Activated CD4-positive, alpha-beta T cell treated with anti-CD3 and anti-CD28 coated beads for 36 hours (primary cell): ENCODE measurements at regions of chr12 and their contacts with region 1.

Region 1: GRCh38 chr12:751192-751998 is 984 bp upstream of the WNK1 start:
- DNase-seq: peak; percentile 93
- ATAC-seq: peak; percentile 50
- H3K4me3 Mint-ChIP-seq: no peak overlapping the region
- H3K27ac Mint-ChIP-seq: no peak overlapping the region
- H3K4me1 Mint-ChIP-seq: peaks cover 17% of the 10 kb centered on the region
- H3K27me3 Mint-ChIP-seq: no peaks in the 10 kb centered on the region

Region 2: DNA sequence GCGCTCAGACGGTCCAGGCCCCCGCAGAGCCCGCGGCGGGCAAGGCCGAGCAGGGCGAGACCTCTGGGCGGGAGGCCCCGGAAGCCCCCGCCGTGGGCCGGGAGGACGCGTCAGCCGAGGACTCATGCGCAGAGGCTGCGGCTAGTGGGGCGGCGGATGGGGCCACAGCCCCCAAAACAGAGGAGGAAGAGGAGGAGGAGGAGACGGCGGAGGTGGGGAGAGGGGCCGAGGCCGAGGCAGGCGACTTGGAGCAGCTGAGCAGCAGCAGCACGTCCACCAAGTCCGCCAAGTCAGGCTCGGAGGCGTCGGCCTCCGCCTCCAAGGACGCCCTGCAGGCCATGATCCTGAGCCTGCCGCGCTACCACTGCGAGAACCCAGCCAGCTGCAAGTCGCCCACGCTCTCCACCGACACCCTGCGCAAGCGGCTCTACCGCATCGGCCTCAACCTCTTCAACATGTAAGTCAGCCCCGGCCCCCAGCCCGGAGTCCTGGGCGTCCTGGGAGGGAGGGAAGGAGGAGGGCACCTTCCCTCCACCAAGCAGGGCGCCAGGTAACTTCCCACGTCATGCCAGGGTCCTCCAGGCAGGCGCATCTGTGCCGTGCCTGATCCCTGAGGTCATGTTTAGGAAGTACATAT is 612.4 kb before region 1 on chr12:
- CTCF ChIA-PET with region 1: no interaction called
- POLR2A ChIA-PET with region 1: no interaction called
- intact Hi-C with region 1: no loop called
- DNase-seq: peak; percentile 43
- ATAC-seq: peak; percentile 36
- H3K4me3 Mint-ChIP-seq: no peak overlapping the region
- H3K27ac Mint-ChIP-seq: no peak overlapping the region
- H3K4me1 Mint-ChIP-seq: no peaks in the 10 kb centered on the region
- H3K27me3 Mint-ChIP-seq: peaks cover 26% of the 10 kb centered on the region

Region 3: GRCh38 chr12:459430-460258 is 291.8 kb before region 1 on chr12 and contains the start of gene B4GALNT3:
- CTCF ChIA-PET with region 1: no interaction called
- POLR2A ChIA-PET with region 1: no interaction called
- intact Hi-C with region 1: loop called in 1 of 2 experiments (anchors 10 kb)
- DNase-seq: peak; percentile 63
- ATAC-seq: peak; percentile 60
- H3K4me3 Mint-ChIP-seq: peak within 1 kb of the TSS; percentile 74
- H3K27ac Mint-ChIP-seq: no peak within 1 kb of the TSS
- H3K4me1 Mint-ChIP-seq: peaks cover 15% of the 10 kb centered on the region
- H3K27me3 Mint-ChIP-seq: peaks cover 26% of the 10 kb centered on the region
- total RNA-seq, gene B4GALNT3: 2.2 to 3.3 TPM

Region 4: DNA sequence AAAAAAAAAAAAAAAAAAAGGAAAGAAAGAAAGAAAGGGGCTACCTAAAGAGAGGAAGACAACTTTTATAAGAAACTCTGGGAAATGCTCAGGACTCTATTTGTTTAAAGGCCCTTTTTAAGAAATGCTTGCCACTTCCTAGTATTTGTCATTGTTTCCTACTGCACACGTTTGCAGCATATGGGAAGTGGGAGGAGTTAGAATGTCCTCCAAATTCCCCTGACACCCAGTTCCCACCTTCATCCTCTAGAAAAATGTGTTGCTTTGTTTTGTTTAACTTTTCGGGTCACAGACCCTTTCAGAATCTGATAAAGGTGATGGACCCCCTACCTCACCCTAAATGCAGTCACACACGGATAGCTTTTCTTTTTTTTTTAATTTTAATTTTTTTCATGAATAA is 129.0 kb before region 1 on chr12:
- CTCF ChIA-PET with region 1: interaction called, 14 read pairs
- POLR2A ChIA-PET with region 1: interaction called, 3 read pairs
- intact Hi-C with region 1: no loop called
- DNase-seq: peak; percentile 28
- ATAC-seq: peak; percentile 76
- H3K4me3 Mint-ChIP-seq: peak overlapping the region; percentile 23
- H3K27ac Mint-ChIP-seq: peak overlapping the region; percentile 93
- H3K4me1 Mint-ChIP-seq: peaks cover 46% of the 10 kb centered on the region
- H3K27me3 Mint-ChIP-seq: no peaks in the 10 kb centered on the region

Region 5: GRCh38 chr12:674272-674781 is 77.1 kb before region 1 on chr12:
- CTCF ChIA-PET with region 1: interaction called, 33 read pairs
- POLR2A ChIA-PET with region 1: interaction called, 10 read pairs
- intact Hi-C with region 1: loop called (anchors 1 kb)
- DNase-seq: peak; percentile 90
- ATAC-seq: peak; percentile 95
- H3K4me3 Mint-ChIP-seq: peak overlapping the region; percentile 59
- H3K27ac Mint-ChIP-seq: peak overlapping the region; percentile 92
- H3K4me1 Mint-ChIP-seq: peaks cover 82% of the 10 kb centered on the region
- H3K27me3 Mint-ChIP-seq: peaks cover 2% of the 10 kb centered on the region

Region 6: GRCh38 chr12:737122-737739 is 14.2 kb before region 1 on chr12:
- CTCF ChIA-PET with region 1: interaction called, 19 read pairs
- POLR2A ChIA-PET with region 1: no interaction called
- intact Hi-C with region 1: no loop called
- DNase-seq: no peak
- ATAC-seq: no peak
- H3K4me3 Mint-ChIP-seq: no peak overlapping the region
- H3K27ac Mint-ChIP-seq: no peak overlapping the region
- H3K4me1 Mint-ChIP-seq: peaks cover 10% of the 10 kb centered on the region
- H3K27me3 Mint-ChIP-seq: peaks cover 2% of the 10 kb centered on the region

Region 7: DNA sequence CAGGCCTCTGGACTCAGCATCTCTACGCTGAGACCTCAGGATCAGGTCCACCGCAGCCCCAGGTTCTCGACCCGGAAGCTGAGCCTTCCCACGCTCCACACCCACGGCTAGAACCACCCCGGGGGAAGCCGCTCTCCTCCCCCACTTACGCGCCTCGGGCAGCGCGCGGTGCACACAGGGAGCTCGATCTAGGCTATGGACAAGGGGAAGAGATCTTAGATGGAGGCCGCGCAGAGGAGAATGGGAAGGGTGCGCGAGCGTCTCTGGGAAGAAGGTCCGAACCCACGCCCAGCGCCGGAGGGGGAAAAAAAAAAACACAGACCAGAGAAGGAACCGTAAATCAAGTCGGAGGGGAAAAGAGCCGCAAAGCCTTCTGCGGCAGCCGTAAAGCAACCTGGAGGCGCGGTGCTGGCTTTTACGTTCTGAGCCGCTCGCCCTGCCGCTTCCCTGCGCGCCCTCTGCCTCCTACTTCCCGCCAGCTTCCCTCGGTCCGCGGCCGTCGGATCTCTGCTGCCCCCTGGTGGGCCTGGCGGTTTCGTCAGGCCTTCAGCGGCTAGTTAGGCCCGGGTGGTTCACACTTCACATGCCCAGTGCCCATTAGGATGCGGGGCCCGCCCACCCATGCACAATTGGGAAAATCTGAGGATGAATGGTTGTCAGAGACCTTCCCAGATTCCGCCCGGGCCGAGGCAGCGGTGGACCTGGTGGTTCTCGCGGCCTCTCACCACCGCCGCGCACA is 198.2 kb after region 1 on chr12 and contains the start of gene RAD52:
- CTCF ChIA-PET with region 1: interaction called, 4 read pairs
- POLR2A ChIA-PET with region 1: no interaction called
- intact Hi-C with region 1: loop called (anchors 1 kb)
- DNase-seq: peak; percentile 99
- ATAC-seq: peak; percentile 93
- H3K4me3 Mint-ChIP-seq: peak within 1 kb of the TSS; percentile 100
- H3K27ac Mint-ChIP-seq: peak within 1 kb of the TSS; percentile 98
- H3K4me1 Mint-ChIP-seq: peaks cover 37% of the 10 kb centered on the region
- H3K27me3 Mint-ChIP-seq: no peaks in the 10 kb centered on the region
- total RNA-seq, gene RAD52: 16.0 to 17.4 TPM